Activated B cell treated with CpG ODN at 0.5 μM for 24 hours (primary cell): ENCODE measurements at regions of chr5 and their contacts with region 1.

Region 1: GRCh38 chr5:133111299-133111698 is 59.5 kb downstream of the HSPA4 start:
- DNase-seq: peak; percentile 73
- ATAC-seq: peak; percentile 53
- H3K4me3 Mint-ChIP-seq: peak overlapping the region; percentile 33
- H3K27ac Mint-ChIP-seq: peak overlapping the region; percentile 68
- H3K4me1 Mint-ChIP-seq: peaks cover 45% of the 10 kb centered on the region
- H3K27me3 Mint-ChIP-seq: no peaks in the 10 kb centered on the region
- CTCF ChIP-seq: peak; percentile 77

Region 2: DNA sequence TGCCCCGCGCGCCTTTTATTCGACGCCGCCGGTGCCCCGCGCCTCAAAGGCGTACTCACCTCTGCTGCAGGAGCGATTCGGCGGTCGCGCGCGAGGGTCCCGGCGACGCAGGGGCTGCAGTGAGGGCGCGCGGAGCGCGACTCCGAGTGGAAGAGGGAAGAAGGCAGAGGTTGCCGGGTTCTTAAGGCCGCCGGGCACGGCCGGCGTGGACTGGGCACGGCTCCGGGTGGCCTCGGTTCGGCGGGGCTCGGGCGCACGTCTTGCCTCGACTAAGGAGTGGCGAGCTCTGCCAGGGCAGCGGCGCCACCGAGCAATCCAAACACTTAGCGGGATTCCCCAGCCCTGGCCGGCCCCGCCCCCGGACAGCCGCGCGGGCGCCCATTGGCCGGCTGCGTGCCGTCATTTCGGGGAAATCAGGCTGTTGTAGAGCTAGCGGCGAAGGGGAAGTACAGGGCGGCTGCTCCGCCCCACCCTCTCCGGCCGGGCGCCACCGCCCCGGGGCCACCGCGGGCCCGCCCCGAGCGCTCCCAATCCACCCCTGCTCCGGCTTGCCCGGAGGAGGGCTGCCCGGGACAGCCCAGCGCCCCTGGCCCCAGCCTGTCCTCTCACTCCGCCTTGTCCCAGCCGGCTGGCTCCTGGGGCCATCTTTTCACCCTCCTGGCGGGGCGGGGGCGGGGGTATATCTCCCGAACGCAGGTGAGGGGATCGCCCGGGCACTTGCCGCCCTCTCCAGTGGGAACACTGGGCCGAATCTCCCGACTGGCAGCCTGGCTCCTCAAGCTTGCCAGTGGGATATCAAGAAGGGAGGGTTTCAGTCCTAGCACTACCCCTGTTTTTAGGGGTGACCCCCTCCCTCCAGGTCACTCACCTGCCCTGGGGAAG is 620.6 kb before region 1 on chr5 and contains the start of gene IRF1:
- CTCF ChIA-PET with region 1: no interaction called
- POLR2A ChIA-PET with region 1: no interaction called
- intact Hi-C with region 1: loop called (anchors 10 kb)
- DNase-seq: peak; percentile 98
- ATAC-seq: peak; percentile 71
- H3K4me3 Mint-ChIP-seq: peak within 1 kb of the TSS; percentile 95
- H3K27ac Mint-ChIP-seq: peak within 1 kb of the TSS; percentile 93
- H3K4me1 Mint-ChIP-seq: peaks cover 82% of the 10 kb centered on the region
- H3K27me3 Mint-ChIP-seq: no peaks in the 10 kb centered on the region
- CTCF ChIP-seq: no peak
- total RNA-seq, gene IRF1: 126 and 134 TPM in 2 replicates

Region 3: GRCh38 chr5:133091034-133091433 is 20.3 kb before region 1 on chr5:
- CTCF ChIA-PET with region 1: no interaction called
- POLR2A ChIA-PET with region 1: no interaction called
- intact Hi-C with region 1: no loop called
- DNase-seq: no peak
- ATAC-seq: no peak
- H3K4me3 Mint-ChIP-seq: no peak overlapping the region
- H3K27ac Mint-ChIP-seq: no peak overlapping the region
- H3K4me1 Mint-ChIP-seq: peaks cover 1% of the 10 kb centered on the region
- H3K27me3 Mint-ChIP-seq: no peaks in the 10 kb centered on the region
- CTCF ChIP-seq: no peak

Region 4: DNA sequence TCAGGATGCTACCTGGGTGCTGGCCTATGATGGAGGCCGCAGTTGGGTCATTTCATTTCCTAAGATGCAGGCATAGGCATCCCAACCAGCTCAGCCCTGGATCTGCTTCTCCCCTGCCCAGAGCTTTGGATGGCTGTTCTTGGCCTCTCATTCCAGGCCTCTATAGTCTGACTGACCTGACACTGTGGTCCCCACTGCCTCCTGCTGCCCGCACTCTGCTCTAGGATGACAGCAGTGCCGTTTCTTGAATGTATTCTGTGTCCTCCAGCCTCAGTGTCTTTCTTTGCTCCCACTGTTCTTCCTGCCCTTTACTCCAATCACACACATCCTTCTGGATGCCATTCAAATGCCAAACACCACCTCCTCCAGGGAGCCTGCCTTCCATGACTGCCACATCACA is 176.2 kb after region 1 on chr5:
- CTCF ChIA-PET with region 1: interaction called, 3 read pairs
- POLR2A ChIA-PET with region 1: interaction called, 3 read pairs
- intact Hi-C with region 1: loop called (anchors 1 kb)
- DNase-seq: no peak
- ATAC-seq: no peak
- H3K4me3 Mint-ChIP-seq: no peak overlapping the region
- H3K27ac Mint-ChIP-seq: no peak overlapping the region
- H3K4me1 Mint-ChIP-seq: no peaks in the 10 kb centered on the region
- H3K27me3 Mint-ChIP-seq: no peaks in the 10 kb centered on the region
- CTCF ChIP-seq: no peak

Region 5: DNA sequence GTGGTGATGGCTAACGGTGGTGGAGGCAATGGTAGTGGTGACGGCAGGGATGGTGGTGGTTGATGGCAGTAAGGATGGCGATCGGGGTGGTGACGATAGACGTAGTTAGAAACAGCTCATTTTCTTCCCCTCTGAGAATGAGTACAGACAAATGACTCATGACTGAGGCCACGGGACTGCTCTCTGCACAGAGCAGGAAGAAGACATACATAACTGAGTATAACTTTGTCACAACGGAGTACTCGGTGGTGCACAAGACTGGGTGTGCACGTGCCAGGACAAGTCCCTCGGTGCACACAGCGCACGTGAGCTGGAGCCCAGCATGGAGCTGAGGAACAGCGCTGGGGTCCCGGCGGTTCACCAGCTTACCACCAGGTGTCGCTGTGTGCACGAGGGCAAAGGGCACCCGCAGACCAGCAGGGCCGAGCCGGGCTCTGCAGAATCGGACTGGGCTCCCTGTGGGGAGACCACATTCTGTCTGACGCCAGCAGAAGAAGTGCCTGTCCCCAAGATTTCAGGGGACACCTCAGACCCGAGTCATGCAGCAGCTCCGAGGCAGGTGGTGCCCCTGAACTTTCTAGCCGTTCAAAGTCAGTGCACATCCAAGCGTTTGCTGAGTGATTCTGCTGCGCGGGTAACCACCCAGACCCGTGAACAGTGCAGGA is 312.5 kb after region 1 on chr5:
- CTCF ChIA-PET with region 1: interaction called, 10 read pairs
- POLR2A ChIA-PET with region 1: no interaction called
- intact Hi-C with region 1: loop called (anchors 5 kb)
- DNase-seq: peak; percentile 75
- ATAC-seq: peak; percentile 94
- H3K4me3 Mint-ChIP-seq: no peak overlapping the region
- H3K27ac Mint-ChIP-seq: peak overlapping the region; percentile 19
- H3K4me1 Mint-ChIP-seq: peaks cover 10% of the 10 kb centered on the region
- H3K27me3 Mint-ChIP-seq: peaks cover 3% of the 10 kb centered on the region
- CTCF ChIP-seq: peak; percentile 81

Region 6: GRCh38 chr5:133868946-133869518 is 757.7 kb after region 1 on chr5:
- CTCF ChIA-PET with region 1: interaction called, 10 read pairs
- POLR2A ChIA-PET with region 1: no interaction called
- intact Hi-C with region 1: loop called (anchors 1 kb)
- DNase-seq: peak; percentile 64
- ATAC-seq: peak; percentile 83
- H3K4me3 Mint-ChIP-seq: no peak overlapping the region
- H3K27ac Mint-ChIP-seq: peak overlapping the region; percentile 25
- H3K4me1 Mint-ChIP-seq: peaks cover 18% of the 10 kb centered on the region
- H3K27me3 Mint-ChIP-seq: no peaks in the 10 kb centered on the region
- CTCF ChIP-seq: no peak

Region 7: GRCh38 chr5:134041570-134042411 is 930.5 kb after region 1 on chr5:
- CTCF ChIA-PET with region 1: interaction called, 11 read pairs
- POLR2A ChIA-PET with region 1: no interaction called
- intact Hi-C with region 1: loop called (anchors 1 kb)
- DNase-seq: no peak
- ATAC-seq: no peak
- H3K4me3 Mint-ChIP-seq: no peak overlapping the region
- H3K27ac Mint-ChIP-seq: no peak overlapping the region
- H3K4me1 Mint-ChIP-seq: peaks cover 4% of the 10 kb centered on the region
- H3K27me3 Mint-ChIP-seq: no peaks in the 10 kb centered on the region
- CTCF ChIP-seq: no peak